ENCODE measurements at regions of chr2 and their contacts with region 1.

Region 1: DNA sequence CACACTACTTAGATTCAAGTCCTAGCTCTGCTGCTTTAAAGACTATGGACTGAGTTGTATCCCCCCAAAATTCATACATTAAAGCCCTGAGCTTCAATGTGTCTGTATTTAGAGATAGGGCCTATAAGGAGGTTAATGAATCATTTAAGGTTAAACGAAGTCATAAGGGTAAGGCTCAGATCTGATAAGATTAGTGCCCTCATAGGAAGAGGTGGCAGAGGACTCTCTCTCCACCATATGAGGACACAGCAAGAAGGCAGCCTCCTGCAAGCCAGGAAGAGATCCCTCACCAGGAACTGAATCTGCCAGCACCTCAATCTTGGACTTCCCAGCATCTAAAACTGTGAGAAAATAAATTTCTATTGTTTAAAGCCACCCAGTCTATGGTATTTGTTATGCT is 3.1 kb upstream of the CYTIP start:
- DNase-seq: no peak
- ATAC-seq: peak; percentile 51
- H3K4me3 Mint-ChIP-seq: peak overlapping the region; percentile 73
- H3K27ac Mint-ChIP-seq: peak overlapping the region; percentile 87
- H3K4me1 Mint-ChIP-seq: peaks cover 57% of the 10 kb centered on the region
- H3K27me3 Mint-ChIP-seq: no peaks in the 10 kb centered on the region

Region 2: DNA sequence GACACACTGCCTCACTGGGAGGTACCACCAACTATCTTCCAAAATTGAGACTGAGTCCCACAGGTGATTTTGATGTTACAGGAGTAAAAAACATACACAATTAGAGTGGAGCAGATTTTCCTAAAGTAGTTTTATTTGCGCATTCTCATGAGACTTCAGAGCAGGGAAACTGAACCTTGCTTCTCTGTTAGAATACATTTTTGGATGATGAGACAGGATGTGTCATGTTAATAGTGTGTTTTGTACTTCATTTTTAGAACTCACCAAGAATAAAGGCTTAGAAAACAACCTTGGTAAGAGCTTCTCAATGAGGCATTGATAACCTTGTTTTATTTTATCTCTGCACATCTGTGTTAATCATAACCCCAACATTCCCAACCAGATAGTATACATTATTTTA is 499.8 kb before region 1 on chr2:
- CTCF ChIA-PET with region 1: no interaction called
- DNase-seq: no peak
- ATAC-seq: no peak
- H3K4me3 Mint-ChIP-seq: no peak overlapping the region
- H3K27ac Mint-ChIP-seq: no peak overlapping the region
- H3K4me1 Mint-ChIP-seq: no peaks in the 10 kb centered on the region
- H3K27me3 Mint-ChIP-seq: no peaks in the 10 kb centered on the region

Region 3: DNA sequence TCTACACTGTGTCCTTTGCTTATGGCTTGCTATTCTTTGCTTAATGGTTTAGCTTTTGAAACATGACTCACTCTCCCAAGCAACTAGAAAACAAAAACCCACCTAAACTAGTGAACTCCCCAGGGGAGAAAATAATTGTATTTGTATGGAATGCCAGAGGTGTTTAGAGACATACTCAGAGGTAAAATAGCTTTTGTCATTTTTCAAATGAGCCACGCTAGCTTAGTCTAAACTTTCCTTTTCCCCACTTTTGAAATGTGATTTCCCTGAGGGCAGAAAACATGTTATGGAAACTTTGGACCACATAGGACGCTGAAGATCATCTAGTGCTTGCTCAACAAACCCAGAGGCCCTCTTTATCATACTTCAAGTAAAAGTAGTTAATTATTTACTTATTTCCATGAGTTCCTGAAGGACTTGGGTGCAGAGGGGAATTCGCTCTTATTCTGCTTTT is 13.4 kb after region 1 on chr2:
- CTCF ChIA-PET with region 1: interaction called, 32 read pairs
- DNase-seq: no peak
- ATAC-seq: no peak
- H3K4me3 Mint-ChIP-seq: no peak overlapping the region
- H3K27ac Mint-ChIP-seq: no peak overlapping the region
- H3K4me1 Mint-ChIP-seq: peaks cover 83% of the 10 kb centered on the region
- H3K27me3 Mint-ChIP-seq: no peaks in the 10 kb centered on the region

Region 4: GRCh38 chr2:157538064-157538463 is 91.0 kb after region 1 on chr2:
- CTCF ChIA-PET with region 1: no interaction called
- DNase-seq: no peak
- ATAC-seq: no peak
- H3K4me3 Mint-ChIP-seq: no peak overlapping the region
- H3K27ac Mint-ChIP-seq: no peak overlapping the region
- H3K4me1 Mint-ChIP-seq: no peaks in the 10 kb centered on the region
- H3K27me3 Mint-ChIP-seq: no peaks in the 10 kb centered on the region